H1 (cell line): ENCODE measurements at regions of chr15 and their contacts with region 1.

Region 1: GRCh38 chr15:25783607-25784540 is 79.3 kb downstream of the ATP10A start:
- DNase-seq: peak; percentile 54 to 95
- H3K4me3 ChIP-seq: no peak overlapping the region
- H3K27ac ChIP-seq: no peak overlapping the region
- H3K4me1 ChIP-seq: peaks cover 0 to 2% (median 0%) of the 10 kb centered on the region in 4 experiments; a peak in 3 of 7 replicates
- H3K27me3 ChIP-seq: no peaks in the 10 kb centered on the region
- CTCF ChIP-seq: peak; percentile 72 to 97 (median 77)
- EP300 ChIP-seq: no peak
- POLR2A ChIP-seq: no peak
- RAD21 ChIP-seq: peak; percentile 75 to 82

Region 2: GRCh38 chr15:25773248-25773647 is 10.6 kb before region 1 on chr15:
- CTCF ChIA-PET with region 1: interaction called, 11 read pairs
- POLR2A ChIA-PET with region 1: no interaction called
- DNase-seq: peak in 1 of 2 experiments; percentile 20
- H3K4me3 ChIP-seq: no peak overlapping the region
- H3K27ac ChIP-seq: no peak overlapping the region
- H3K4me1 ChIP-seq: peaks cover 0 to 8% (median 6%) of the 10 kb centered on the region in 4 experiments; a peak in 4 of 7 replicates
- H3K27me3 ChIP-seq: no peaks in the 10 kb centered on the region
- CTCF ChIP-seq: no peak
- EP300 ChIP-seq: no peak
- POLR2A ChIP-seq: no peak
- RAD21 ChIP-seq: no peak

Region 3: GRCh38 chr15:25797936-25798901 is 14.3 kb after region 1 on chr15:
- CTCF ChIA-PET with region 1: interaction called, 16 read pairs
- POLR2A ChIA-PET with region 1: no interaction called
- DNase-seq: no peak
- H3K4me3 ChIP-seq: no peak overlapping the region
- H3K27ac ChIP-seq: no peak overlapping the region
- H3K4me1 ChIP-seq: peaks cover 0 to 6% (median 3%) of the 10 kb centered on the region in 4 experiments; a peak in 4 of 7 replicates
- H3K27me3 ChIP-seq: no peaks in the 10 kb centered on the region
- CTCF ChIP-seq: no peak
- EP300 ChIP-seq: no peak
- POLR2A ChIP-seq: no peak
- RAD21 ChIP-seq: no peak

Region 4: GRCh38 chr15:25811481-25811906 is 27.6 kb after region 1 on chr15:
- CTCF ChIA-PET with region 1: interaction called, 10 read pairs
- POLR2A ChIA-PET with region 1: no interaction called
- DNase-seq: no peak
- H3K4me3 ChIP-seq: no peak overlapping the region
- H3K27ac ChIP-seq: no peak overlapping the region
- H3K4me1 ChIP-seq: peaks cover 0 to 10% (median 8%) of the 10 kb centered on the region in 4 experiments; a peak in 4 of 7 replicates
- H3K27me3 ChIP-seq: no peaks in the 10 kb centered on the region
- CTCF ChIP-seq: no peak
- EP300 ChIP-seq: no peak
- POLR2A ChIP-seq: no peak
- RAD21 ChIP-seq: no peak

Region 5: GRCh38 chr15:25933456-25934158 is 149.7 kb after region 1 on chr15:
- CTCF ChIA-PET with region 1: interaction called, 26 read pairs
- POLR2A ChIA-PET with region 1: no interaction called
- DNase-seq: peak; percentile 49 to 74
- H3K4me3 ChIP-seq: peak overlapping the region; percentile 13 to 51 (median 24); a peak in 6 of 8 replicates
- H3K27ac ChIP-seq: no peak overlapping the region
- H3K4me1 ChIP-seq: peaks cover 0 to 9% (median 7%) of the 10 kb centered on the region in 4 experiments; a peak in 6 of 7 replicates
- H3K27me3 ChIP-seq: no peaks in the 10 kb centered on the region; a peak in 1 of 7 replicates
- CTCF ChIP-seq: peak; percentile 79 to 81 (median 80)
- EP300 ChIP-seq: no peak
- POLR2A ChIP-seq: no peak
- RAD21 ChIP-seq: peak; percentile 82